SK-N-SH (cell line): ENCODE measurements at regions of chr17 and their contacts with region 1.

Region 1: DNA sequence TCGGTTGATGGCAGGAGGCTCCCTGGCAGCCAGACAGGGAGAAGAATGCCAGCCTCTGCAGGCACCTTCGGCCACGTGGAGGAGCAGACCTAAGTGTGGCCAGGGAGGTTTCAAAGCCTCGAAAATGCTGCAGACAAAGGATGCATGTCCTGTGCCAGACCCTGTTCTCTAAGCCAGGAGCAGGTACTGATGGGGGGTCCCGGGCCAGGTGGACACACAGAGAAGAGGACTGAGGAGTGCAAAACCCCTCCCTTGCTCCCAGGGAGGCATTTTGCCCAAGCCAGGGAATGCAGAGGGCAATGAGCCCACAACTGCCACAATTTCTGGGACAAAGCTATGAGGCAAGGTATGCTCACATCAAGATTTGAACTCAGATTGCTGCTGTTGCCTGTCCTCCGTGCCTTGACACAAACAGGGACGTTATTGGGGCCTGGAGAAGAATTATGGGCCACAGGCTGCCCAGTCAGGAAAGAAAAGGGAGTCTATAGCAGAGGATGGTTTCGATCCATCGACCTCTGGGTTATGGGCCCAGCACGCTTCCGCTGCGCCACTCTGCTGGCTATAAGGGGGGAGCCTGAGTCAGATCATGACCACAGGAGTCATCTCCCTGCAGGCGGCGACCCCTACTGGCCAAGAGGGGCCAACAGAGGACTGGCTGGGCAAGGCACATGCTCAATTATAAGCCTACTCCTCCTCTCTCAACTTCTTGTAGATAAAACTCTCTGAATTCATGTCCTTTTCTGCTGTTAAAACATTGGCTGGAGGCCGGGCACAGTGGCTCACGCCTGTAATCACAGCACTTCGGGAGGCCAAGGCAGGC is 25.1 kb upstream of the FOXK2 start:
- DNase-seq: peak; percentile 94
- H3K4me3 ChIP-seq: peak overlapping the region; percentile 22 to 57
- H3K27ac ChIP-seq: peak overlapping the region; percentile 50 to 76
- H3K4me1 ChIP-seq: peaks cover 8 to 21% of the 10 kb centered on the region in 2 experiments; a peak in 2 of 4 replicates
- H3K27me3 ChIP-seq: no peaks in the 10 kb centered on the region
- CTCF ChIP-seq: peak; percentile 100
- EP300 ChIP-seq: peak in 1 of 2 experiments; percentile 64; a peak in 1 of 4 replicates
- RAD21 ChIP-seq: peak; percentile 50

Region 2: DNA sequence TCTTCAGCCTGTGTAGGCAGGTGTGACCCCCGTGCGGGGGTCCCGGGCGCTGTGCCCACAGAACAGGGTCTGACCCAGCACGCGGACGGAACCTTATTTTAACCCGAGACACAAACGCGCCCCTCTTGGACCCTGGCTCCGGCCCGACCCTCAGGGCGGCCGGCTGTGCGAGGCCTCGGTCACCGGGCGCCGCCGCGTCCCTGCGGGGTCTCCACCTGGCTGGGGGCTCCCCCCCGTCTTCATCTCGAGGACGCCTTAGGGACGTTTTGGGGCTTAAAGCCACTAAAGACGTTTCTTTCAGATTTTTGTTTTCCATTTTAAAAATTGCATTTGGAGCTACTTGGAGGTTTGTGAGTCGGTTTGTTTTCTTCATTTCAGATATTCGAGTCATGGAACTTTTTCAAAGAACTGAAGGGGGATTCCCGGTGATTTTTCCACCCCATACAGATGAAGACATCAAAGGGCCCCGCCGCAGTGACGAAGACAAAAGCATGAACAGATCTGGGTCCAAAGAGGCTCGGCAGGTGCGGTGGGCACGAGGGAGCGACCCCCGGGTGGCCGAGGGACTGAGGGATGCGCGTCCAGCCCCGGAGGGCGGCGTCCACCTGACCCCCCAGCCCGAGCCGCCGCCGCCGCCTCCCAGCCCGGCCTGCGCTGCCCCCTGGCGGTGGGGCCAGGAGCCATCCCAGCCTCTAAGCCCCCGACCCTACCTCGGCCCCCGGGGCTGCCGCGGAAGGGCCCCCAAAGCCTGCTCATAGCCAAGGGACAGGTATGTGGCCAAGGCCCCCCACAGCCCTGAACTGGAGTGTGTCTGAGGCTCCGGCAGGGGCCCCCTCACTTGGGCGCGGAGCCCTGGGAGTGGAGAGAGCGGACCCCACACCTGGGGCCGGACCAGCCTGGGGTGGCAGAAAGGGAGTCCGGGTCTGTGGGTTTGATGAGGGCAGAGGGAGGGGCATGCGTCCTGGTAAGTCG is 173.2 kb before region 1 on chr17:
- CTCF ChIA-PET with region 1: no interaction called
- POLR2A ChIA-PET with region 1: no interaction called
- DNase-seq: peak; percentile 95
- H3K4me3 ChIP-seq: peak overlapping the region; percentile 32 to 52
- H3K27ac ChIP-seq: no peak overlapping the region
- H3K4me1 ChIP-seq: peaks cover 5 to 14% of the 10 kb centered on the region in 2 experiments; a peak in 3 of 4 replicates
- H3K27me3 ChIP-seq: peaks cover 17% of the 10 kb centered on the region; the same call in 1 of the 2 replicates
- CTCF ChIP-seq: peak; percentile 99
- EP300 ChIP-seq: no peak
- RAD21 ChIP-seq: peak; percentile 70

Region 3: GRCh38 chr17:82477934-82478333 is 16.5 kb before region 1 on chr17:
- CTCF ChIA-PET with region 1: interaction called, 35 read pairs
- POLR2A ChIA-PET with region 1: interaction called, 4 read pairs
- DNase-seq: no peak
- H3K4me3 ChIP-seq: no peak overlapping the region
- H3K27ac ChIP-seq: no peak overlapping the region
- H3K4me1 ChIP-seq: no peaks in the 10 kb centered on the region
- H3K27me3 ChIP-seq: no peaks in the 10 kb centered on the region
- CTCF ChIP-seq: no peak
- EP300 ChIP-seq: no peak
- RAD21 ChIP-seq: no peak

Region 4: GRCh38 chr17:82518826-82519810 is 24.7 kb after region 1 on chr17 and contains the start of gene FOXK2:
- CTCF ChIA-PET with region 1: interaction called, 15 read pairs
- POLR2A ChIA-PET with region 1: interaction called, 6 read pairs
- DNase-seq: peak; percentile 100
- H3K4me3 ChIP-seq: peak within 1 kb of the TSS; percentile 62 to 75
- H3K27ac ChIP-seq: peak within 1 kb of the TSS; percentile 60 to 70
- H3K4me1 ChIP-seq: peaks cover 2 to 6% of the 10 kb centered on the region in 2 experiments; a peak in 1 of 4 replicates
- H3K27me3 ChIP-seq: no peaks in the 10 kb centered on the region
- CTCF ChIP-seq: no peak
- EP300 ChIP-seq: peak in 1 of 2 experiments; percentile 45; a peak in 1 of 4 replicates
- RAD21 ChIP-seq: no peak
- polyA plus RNA-seq, gene FOXK2: 33.6 and 36.4 TPM in 2 replicates

Region 5: DNA sequence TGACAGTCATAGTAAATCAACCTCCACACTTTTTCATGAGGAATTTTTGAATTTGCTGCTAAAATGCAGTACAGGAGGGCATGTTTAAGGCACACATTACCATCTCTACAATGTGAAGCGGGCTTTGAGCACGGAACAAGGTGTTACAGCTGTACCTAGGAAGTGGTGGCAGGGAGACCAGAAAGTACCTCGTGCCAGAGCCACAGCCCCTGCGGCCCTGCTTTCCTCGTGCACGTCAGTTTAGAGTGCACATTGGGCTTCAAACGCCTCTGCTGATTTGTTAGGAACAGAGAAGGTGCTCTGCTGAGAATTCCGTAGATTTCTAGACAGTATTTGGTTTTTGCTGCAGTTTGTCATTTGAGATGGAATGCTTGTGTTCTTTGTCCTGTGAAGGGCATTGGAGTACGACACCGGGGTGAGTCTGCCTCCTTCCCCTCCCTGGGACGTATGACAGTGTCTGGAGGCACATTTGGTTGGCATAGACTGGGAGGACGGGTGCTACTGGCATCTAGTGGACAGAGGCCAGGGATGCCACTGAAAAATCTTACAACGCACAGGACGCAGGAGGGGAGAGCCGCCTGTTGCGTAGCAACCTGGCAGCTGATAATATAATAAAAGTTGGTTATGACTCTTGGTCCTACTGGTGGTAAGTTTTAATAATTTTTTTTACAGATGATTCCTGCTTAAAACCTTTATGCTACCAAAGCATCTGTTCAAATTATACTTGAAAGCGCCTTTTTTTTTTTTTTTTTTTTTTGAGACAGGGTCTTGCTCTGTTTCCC is 34.2 kb after region 1 on chr17:
- CTCF ChIA-PET with region 1: interaction called, 25 read pairs
- POLR2A ChIA-PET with region 1: no interaction called
- DNase-seq: peak; percentile 88
- H3K4me3 ChIP-seq: no peak overlapping the region
- H3K27ac ChIP-seq: peak overlapping the region; percentile 47 to 63
- H3K4me1 ChIP-seq: peaks cover 25 to 34% of the 10 kb centered on the region in 2 experiments
- H3K27me3 ChIP-seq: no peaks in the 10 kb centered on the region
- CTCF ChIP-seq: peak; percentile 88
- EP300 ChIP-seq: no peak
- RAD21 ChIP-seq: peak; percentile 93

Region 6: DNA sequence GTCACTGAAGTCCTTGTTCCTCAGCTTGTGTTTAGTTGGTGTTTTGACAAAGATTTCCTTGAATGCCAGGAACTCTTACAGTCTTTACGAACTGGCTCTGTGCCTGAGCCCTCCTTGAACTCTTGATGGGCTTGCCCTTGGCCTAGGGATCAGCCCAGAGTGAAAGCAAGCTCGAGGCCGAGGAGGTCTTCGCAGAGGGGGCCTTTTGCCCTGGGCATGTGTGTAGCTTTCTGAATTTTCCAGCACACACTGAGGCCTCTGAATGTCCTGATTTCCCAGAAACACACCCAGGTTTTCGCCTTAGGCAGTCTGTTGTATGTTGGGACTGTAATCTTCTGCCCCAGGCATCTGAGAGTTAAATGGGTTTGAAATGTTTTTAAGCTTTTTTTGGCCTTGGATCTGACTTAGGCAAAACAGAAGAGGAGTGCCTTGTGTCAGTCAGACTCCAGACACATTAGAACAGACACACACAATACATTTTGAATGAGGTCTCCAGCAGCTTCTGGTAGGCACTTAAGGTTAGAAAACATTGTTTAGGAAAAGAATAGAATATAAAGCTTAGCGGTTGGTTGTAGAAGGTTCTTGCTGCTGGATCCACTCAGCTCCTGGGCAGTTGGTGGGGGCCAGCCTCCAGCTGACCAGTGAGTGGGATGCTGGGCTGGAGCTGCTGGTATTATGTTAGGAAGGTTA is 42.2 kb after region 1 on chr17:
- CTCF ChIA-PET with region 1: interaction called, 19 read pairs
- POLR2A ChIA-PET with region 1: no interaction called
- DNase-seq: peak; percentile 54
- H3K4me3 ChIP-seq: peak overlapping the region in 1 of 2 experiments; percentile 49; a peak in 2 of 4 replicates
- H3K27ac ChIP-seq: peak overlapping the region; percentile 87 to 97
- H3K4me1 ChIP-seq: peaks cover 28 to 38% of the 10 kb centered on the region in 2 experiments
- H3K27me3 ChIP-seq: no peaks in the 10 kb centered on the region
- CTCF ChIP-seq: no peak
- EP300 ChIP-seq: peak in 1 of 2 experiments; percentile 53; a peak in 2 of 4 replicates
- RAD21 ChIP-seq: no peak